CD4-positive, alpha-beta T cell (primary cell): ENCODE measurements at regions of chrX and their contacts with region 1.

Region 1: DNA sequence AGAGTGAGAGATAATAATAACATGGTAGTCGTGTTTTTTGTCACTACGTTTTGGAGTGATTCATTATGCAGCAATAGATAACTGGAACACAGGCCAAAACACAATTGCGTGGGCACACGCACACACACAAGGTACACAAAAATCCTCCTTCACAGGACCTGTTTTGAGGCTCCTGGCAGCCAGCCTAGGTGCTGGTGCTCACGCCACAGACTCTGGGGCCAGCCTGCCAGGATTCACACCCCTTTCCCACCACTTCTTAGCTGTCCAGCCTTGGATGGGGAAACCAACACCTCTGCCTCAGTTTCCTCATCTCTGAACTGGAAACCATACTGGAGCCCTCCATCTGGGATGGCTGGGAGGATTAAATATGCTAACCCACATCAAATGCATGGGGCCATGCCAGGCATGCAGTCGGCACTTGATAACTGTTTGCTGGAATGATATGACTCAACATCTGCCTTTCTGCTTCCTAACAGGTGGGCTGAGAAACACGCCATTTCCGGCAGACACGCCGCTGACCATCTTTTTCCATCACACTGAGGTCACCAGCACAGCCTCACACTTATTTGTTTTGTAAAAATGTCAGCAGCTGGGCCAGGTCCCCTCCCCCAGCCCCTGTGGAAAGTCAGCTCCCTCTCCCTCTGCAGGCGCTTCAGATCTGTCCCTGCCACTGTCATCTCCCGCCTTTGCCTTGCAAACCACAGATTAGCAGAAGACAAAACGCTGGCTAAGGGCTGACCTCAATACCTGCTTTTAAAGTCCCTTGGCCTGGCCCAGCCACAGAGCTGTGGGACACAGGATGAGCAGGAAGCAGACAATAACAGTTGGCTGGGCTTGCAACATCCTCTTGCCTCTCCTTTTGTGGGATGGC is 237.5 kb downstream of the BCOR start:
- DNase-seq: peak in 13 of 14 experiments; percentile 34 to 82 (median 63)
- ATAC-seq: peak; percentile 41
- H3K4me3 ChIP-seq: no peak overlapping the region
- H3K4me3 Mint-ChIP-seq: peak overlapping the region; percentile 30
- H3K27ac ChIP-seq: no peak overlapping the region
- H3K27ac Mint-ChIP-seq: peak overlapping the region; percentile 87
- H3K4me1 ChIP-seq: peaks cover 40% of the 10 kb centered on the region
- H3K4me1 Mint-ChIP-seq: peaks cover 28% of the 10 kb centered on the region
- H3K27me3 ChIP-seq: no peaks in the 10 kb centered on the region
- H3K27me3 Mint-ChIP-seq: no peaks in the 10 kb centered on the region
- CTCF ChIP-seq: no peak

Region 2: GRCh38 chrX:39772057-39772832 is 88.0 kb before region 1 on chrX:
- CTCF ChIA-PET with region 1: no interaction called
- POLR2A ChIA-PET with region 1: interaction called, 3 read pairs
- intact Hi-C with region 1: loop called in 1 of 2 experiments (anchors 5 kb)
- DNase-seq: peak; percentile 4 to 77 (median 58)
- ATAC-seq: peak; percentile 57
- H3K4me3 ChIP-seq: no peak overlapping the region
- H3K4me3 Mint-ChIP-seq: peak overlapping the region; percentile 57
- H3K27ac ChIP-seq: peak overlapping the region; percentile 59 to 64
- H3K27ac Mint-ChIP-seq: peak overlapping the region; percentile 99
- H3K4me1 ChIP-seq: peaks cover 60% of the 10 kb centered on the region
- H3K4me1 Mint-ChIP-seq: peaks cover 57% of the 10 kb centered on the region
- H3K27me3 ChIP-seq: no peaks in the 10 kb centered on the region
- H3K27me3 Mint-ChIP-seq: no peaks in the 10 kb centered on the region
- CTCF ChIP-seq: no peak

Region 3: DNA sequence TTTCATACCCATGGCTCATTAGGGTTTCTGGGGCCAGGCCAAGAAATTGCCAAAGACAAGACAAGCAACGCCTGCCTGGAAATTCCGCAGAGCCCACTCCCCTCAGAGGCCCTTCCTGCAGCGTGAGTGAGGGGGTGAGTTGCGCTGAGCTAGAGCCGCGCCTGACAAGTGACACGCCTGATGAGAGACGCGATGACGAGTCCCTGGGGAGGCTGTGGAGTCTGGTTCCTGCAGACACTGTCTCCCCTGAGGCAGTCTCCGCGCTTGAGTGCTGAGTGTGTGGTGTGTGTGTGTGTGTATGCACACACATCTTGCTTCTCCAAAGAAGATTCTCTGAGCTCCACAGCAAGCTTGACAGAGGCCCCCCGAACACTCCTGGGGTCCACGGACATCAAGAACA is 32.3 kb before region 1 on chrX:
- CTCF ChIA-PET with region 1: interaction called, 3 read pairs
- POLR2A ChIA-PET with region 1: no interaction called
- intact Hi-C with region 1: loop called in 1 of 2 experiments (anchors 5 kb)
- DNase-seq: no peak
- ATAC-seq: no peak
- H3K4me3 ChIP-seq: no peak overlapping the region
- H3K4me3 Mint-ChIP-seq: no peak overlapping the region
- H3K27ac ChIP-seq: no peak overlapping the region
- H3K27ac Mint-ChIP-seq: no peak overlapping the region
- H3K4me1 ChIP-seq: no peaks in the 10 kb centered on the region
- H3K4me1 Mint-ChIP-seq: no peaks in the 10 kb centered on the region
- H3K27me3 ChIP-seq: no peaks in the 10 kb centered on the region
- H3K27me3 Mint-ChIP-seq: no peaks in the 10 kb centered on the region
- CTCF ChIP-seq: no peak

Region 4: DNA sequence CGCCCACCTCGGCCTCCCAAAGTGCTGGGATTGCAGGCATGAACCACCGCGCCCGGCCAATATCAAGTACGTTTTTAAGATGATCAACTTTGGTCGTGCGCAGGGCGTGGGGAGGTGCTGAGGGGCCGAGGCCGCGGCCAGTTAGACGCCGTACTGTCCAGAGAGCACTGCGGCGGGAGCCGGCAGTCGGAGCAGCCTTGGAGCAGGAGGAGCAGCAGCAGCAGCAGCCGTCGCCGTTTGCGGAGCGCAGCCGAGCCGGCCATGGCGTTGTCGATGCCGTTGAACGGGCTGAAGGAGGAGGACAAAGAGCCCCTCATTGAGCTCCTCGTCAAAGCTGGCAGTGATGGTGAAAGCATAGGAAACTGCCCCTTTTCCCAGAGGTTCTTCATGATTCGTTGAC is 1216.5 kb after region 1 on chrX:
- CTCF ChIA-PET with region 1: no interaction called
- POLR2A ChIA-PET with region 1: no interaction called
- intact Hi-C with region 1: no loop called
- DNase-seq: no peak
- ATAC-seq: no peak
- H3K4me3 ChIP-seq: no peak overlapping the region
- H3K4me3 Mint-ChIP-seq: no peak overlapping the region
- H3K27ac ChIP-seq: no peak overlapping the region
- H3K27ac Mint-ChIP-seq: no peak overlapping the region
- H3K4me1 ChIP-seq: no peaks in the 10 kb centered on the region
- H3K4me1 Mint-ChIP-seq: no peaks in the 10 kb centered on the region
- H3K27me3 ChIP-seq: no peaks in the 10 kb centered on the region
- H3K27me3 Mint-ChIP-seq: no peaks in the 10 kb centered on the region
- CTCF ChIP-seq: no peak